ENCODE measurements at regions of chr10 and their contacts with region 1.

Region 1: GRCh38 chr10:14837757-14838581 is at the starts of genes CDNF, HSPA14 and MSANTD7:
- DNase-seq: peak; percentile 98 to 99 (median 99)
- H3K4me3 ChIP-seq: peak within 1 kb of the TSS; percentile 68 to 79
- H3K4me3 Mint-ChIP-seq: peak within 1 kb of the TSS; percentile 89 to 97 (median 94)
- H3K27ac ChIP-seq: peak within 1 kb of the TSS; percentile 91
- H3K27ac Mint-ChIP-seq: peak within 1 kb of the TSS; percentile 86 to 99 (median 98)
- H3K4me1 ChIP-seq: peaks cover 26% of the 10 kb centered on the region
- H3K4me1 Mint-ChIP-seq: peaks cover 14 to 33% (median 26%) of the 10 kb centered on the region in 4 donors
- H3K27me3 ChIP-seq: no peaks in the 10 kb centered on the region
- H3K27me3 Mint-ChIP-seq: no peaks in the 10 kb centered on the region
- total RNA-seq, gene CDNF: 1.7 to 2.5 TPM
- total RNA-seq, gene HSPA14: 16.0 to 17.7 TPM
- total RNA-seq, gene MSANTD7: 16.2 to 17.0 TPM

Region 2: DNA sequence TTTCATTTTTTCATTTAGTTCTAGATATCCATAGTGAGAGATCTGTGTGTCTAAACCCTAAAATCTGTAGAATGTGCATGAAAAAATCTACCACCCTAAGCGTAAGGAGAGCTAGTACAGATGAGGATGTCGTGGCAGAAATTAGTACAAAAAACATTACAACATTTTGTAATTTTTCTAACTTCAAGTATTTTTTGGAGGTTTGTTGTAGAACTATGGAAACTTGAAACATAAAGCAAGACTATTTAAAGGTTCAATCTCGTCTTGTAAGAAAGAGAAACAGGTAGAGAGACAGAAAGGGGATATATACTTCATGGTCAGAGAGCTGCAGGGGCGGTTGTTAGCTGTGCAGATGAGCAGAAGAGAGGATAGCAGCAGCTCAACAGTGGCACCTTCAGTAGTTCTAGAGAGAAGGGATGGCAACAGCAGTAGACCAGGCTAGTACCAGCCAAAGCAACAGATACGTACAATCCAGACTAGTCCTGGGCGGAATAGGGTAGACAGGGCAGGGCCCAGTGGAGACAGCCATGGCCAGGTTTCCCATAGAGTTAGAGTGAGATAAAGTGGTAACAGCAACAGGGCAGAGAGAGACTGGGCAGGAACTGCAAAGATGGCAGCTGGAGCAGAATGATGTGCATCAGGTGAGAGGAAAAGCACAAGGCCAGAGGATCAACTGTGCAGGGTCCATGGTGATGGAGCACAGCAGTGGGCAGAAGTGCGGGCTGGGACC is 652.5 kb before region 1 on chr10:
- CTCF ChIA-PET with region 1: no interaction called
- POLR2A ChIA-PET with region 1: interaction called, 8 read pairs
- intact Hi-C with region 1: loop called (anchors 5 kb)
- DNase-seq: peak in 3 of 5 donors; percentile 74 to 85 (median 80)
- H3K4me3 ChIP-seq: peak overlapping the region in 1 of 2 donors; percentile 7
- H3K4me3 Mint-ChIP-seq: peak overlapping the region; percentile 73 to 86 (median 80)
- H3K27ac ChIP-seq: peak overlapping the region; percentile 51
- H3K27ac Mint-ChIP-seq: peak overlapping the region; percentile 93 to 99 (median 98)
- H3K4me1 ChIP-seq: peaks cover 24% of the 10 kb centered on the region
- H3K4me1 Mint-ChIP-seq: peaks cover 21 to 28% (median 24%) of the 10 kb centered on the region in 4 donors
- H3K27me3 ChIP-seq: peaks cover 9% of the 10 kb centered on the region
- H3K27me3 Mint-ChIP-seq: peaks cover 19 to 23% of the 10 kb centered on the region in 2 donors

Region 3: GRCh38 chr10:14543046-14543903 is 294.7 kb before region 1 on chr10:
- CTCF ChIA-PET with region 1: interaction called, 9 read pairs
- POLR2A ChIA-PET with region 1: interaction called, 13 read pairs
- intact Hi-C with region 1: no loop called
- DNase-seq: peak; percentile 55 to 79 (median 59)
- H3K4me3 ChIP-seq: no peak overlapping the region
- H3K4me3 Mint-ChIP-seq: peak overlapping the region; percentile 30 to 85 (median 70)
- H3K27ac ChIP-seq: peak overlapping the region; percentile 56
- H3K27ac Mint-ChIP-seq: peak overlapping the region; percentile 56 to 94 (median 85)
- H3K4me1 ChIP-seq: peaks cover 97% of the 10 kb centered on the region
- H3K4me1 Mint-ChIP-seq: peaks cover 73 to 96% (median 84%) of the 10 kb centered on the region in 4 donors
- H3K27me3 ChIP-seq: no peaks in the 10 kb centered on the region
- H3K27me3 Mint-ChIP-seq: no peaks in the 10 kb centered on the region

Region 4: DNA sequence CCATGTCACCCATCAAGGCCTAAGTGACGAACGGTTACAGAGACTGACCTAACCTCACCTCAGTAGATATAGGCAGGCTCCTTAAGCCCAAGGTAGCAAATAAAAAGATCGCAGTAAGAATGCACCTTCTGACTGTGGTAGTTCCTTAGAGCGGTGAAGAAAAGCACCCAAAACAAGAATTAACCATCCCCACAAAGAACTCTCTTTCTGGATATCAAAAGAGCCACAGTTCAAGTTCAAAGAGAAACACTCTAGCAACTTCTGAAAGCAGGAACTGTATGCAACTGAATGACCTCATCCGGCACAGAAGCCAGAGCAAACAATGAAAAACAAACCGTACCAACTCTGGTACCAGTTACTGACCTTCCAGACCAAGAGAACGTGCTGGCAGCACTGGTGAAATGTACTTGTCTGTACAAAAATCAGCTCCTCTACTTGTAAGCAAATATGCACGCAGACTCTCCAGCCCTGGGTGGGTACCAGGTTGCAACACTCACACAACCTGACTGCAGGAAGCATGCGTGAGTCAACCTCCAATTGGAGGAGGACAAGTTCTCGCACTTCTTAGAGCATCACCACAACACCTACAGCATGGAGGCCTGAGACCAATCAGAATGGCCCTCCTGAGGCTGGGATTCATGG is 266.0 kb before region 1 on chr10:
- CTCF ChIA-PET with region 1: interaction called, 3 read pairs
- POLR2A ChIA-PET with region 1: interaction called, 11 read pairs
- intact Hi-C with region 1: no loop called
- DNase-seq: peak; percentile 86 to 91 (median 89)
- H3K4me3 ChIP-seq: peak overlapping the region; percentile 70 to 75
- H3K4me3 Mint-ChIP-seq: peak overlapping the region; percentile 90 to 98 (median 94)
- H3K27ac ChIP-seq: peak overlapping the region; percentile 82
- H3K27ac Mint-ChIP-seq: peak overlapping the region; percentile 94 to 100 (median 97)
- H3K4me1 ChIP-seq: peaks cover 93% of the 10 kb centered on the region
- H3K4me1 Mint-ChIP-seq: peaks cover 58 to 97% (median 79%) of the 10 kb centered on the region in 4 donors
- H3K27me3 ChIP-seq: no peaks in the 10 kb centered on the region
- H3K27me3 Mint-ChIP-seq: no peaks in the 10 kb centered on the region

Region 5: GRCh38 chr10:14604181-14605142 is 233.5 kb before region 1 on chr10:
- CTCF ChIA-PET with region 1: interaction called, 3 read pairs
- POLR2A ChIA-PET with region 1: interaction called, 8 read pairs
- intact Hi-C with region 1: loop called (anchors 2 kb)
- DNase-seq: peak; percentile 67 to 79 (median 70)
- H3K4me3 ChIP-seq: peak overlapping the region; percentile 48 to 86
- H3K4me3 Mint-ChIP-seq: peak overlapping the region; percentile 89 to 100 (median 96)
- H3K27ac ChIP-seq: peak overlapping the region; percentile 76
- H3K27ac Mint-ChIP-seq: peak overlapping the region; percentile 92 to 100 (median 97)
- H3K4me1 ChIP-seq: peaks cover 43% of the 10 kb centered on the region
- H3K4me1 Mint-ChIP-seq: peaks cover 38 to 59% (median 49%) of the 10 kb centered on the region in 4 donors
- H3K27me3 ChIP-seq: no peaks in the 10 kb centered on the region
- H3K27me3 Mint-ChIP-seq: no peaks in the 10 kb centered on the region

Region 6: DNA sequence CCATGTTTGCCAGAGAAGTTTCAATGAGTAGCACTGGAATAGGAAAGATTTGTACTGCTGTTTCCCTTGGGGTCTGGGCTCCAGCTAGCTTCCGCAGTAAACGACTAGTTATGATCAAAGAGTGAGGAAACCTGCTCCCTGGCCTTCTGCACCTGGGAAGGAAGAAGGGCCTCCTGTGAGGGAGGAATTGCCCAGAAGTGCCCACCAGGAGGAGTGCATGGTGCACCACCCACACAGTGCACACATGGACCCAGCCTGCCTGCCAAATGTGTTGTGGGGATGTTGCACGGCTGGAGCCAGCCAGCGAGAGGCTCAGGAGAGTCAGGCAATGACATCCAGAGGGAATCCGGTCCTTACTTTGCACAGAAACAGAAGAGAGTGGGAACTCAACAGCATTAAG is 36.2 kb before region 1 on chr10:
- CTCF ChIA-PET with region 1: no interaction called
- POLR2A ChIA-PET with region 1: no interaction called
- intact Hi-C with region 1: no loop called
- DNase-seq: no peak
- H3K4me3 ChIP-seq: no peak overlapping the region
- H3K4me3 Mint-ChIP-seq: no peak overlapping the region
- H3K27ac ChIP-seq: no peak overlapping the region
- H3K27ac Mint-ChIP-seq: no peak overlapping the region
- H3K4me1 ChIP-seq: no peaks in the 10 kb centered on the region
- H3K4me1 Mint-ChIP-seq: no peaks in the 10 kb centered on the region
- H3K27me3 ChIP-seq: no peaks in the 10 kb centered on the region
- H3K27me3 Mint-ChIP-seq: peaks cover 0 to 2% of the 10 kb centered on the region in 2 donors

Region 7: GRCh38 chr10:14878266-14879054 is 40.5 kb after region 1 on chr10 and contains the start of gene SUV39H2:
- CTCF ChIA-PET with region 1: interaction called, 14 read pairs
- POLR2A ChIA-PET with region 1: interaction called, 56 read pairs
- intact Hi-C with region 1: loop called (anchors 1 kb)
- DNase-seq: peak; percentile 87 to 91 (median 90)
- H3K4me3 ChIP-seq: peak within 1 kb of the TSS; percentile 44 to 88
- H3K4me3 Mint-ChIP-seq: peak within 1 kb of the TSS; percentile 93 to 96 (median 94)
- H3K27ac ChIP-seq: peak within 1 kb of the TSS; percentile 84
- H3K27ac Mint-ChIP-seq: peak within 1 kb of the TSS; percentile 87 to 95 (median 94)
- H3K4me1 ChIP-seq: peaks cover 17% of the 10 kb centered on the region
- H3K4me1 Mint-ChIP-seq: peaks cover 13 to 48% (median 22%) of the 10 kb centered on the region in 4 donors
- H3K27me3 ChIP-seq: no peaks in the 10 kb centered on the region
- H3K27me3 Mint-ChIP-seq: no peaks in the 10 kb centered on the region
- total RNA-seq, gene SUV39H2: 5.0 to 5.7 TPM

Region 8: DNA sequence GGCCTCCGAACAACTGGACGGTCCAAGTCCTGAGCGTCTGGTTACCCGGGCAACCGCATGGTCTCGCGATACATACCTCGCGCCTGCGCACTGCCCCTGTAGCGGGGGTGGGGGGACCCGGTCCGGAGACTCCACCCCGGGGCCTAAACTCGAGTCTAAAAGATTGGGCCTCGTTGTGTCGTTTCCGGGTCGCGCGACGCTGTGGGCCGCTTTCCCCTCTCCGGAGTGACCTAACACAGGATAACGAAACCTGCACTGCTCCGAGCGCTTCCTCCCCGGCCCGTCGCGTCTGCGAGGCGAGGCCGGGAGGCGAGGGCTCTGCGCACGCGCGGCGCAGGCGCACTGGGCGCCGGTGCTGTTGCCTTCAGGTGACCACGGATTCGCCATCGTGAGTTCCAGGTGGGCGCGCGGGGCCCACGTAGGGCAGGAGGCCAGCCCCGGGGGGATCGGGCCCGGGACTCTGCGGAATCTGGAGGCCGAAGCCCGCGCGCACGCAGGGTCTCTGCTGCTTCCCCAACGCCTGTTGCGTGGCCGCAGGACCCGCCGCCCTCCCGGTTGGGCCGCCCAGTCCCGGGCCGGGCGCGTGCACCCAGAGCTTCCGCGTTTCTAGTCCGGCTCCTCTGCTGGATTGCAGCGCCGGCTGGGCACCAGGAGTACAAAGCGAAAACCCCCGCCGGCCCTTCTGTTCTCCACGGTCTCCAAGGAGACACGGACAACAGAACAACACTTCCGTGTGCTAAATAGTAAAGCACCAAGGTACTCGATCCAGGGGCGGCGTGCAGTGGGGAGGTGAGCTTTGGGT is 259.2 kb after region 1 on chr10 and contains the start of gene RPP38:
- CTCF ChIA-PET with region 1: no interaction called
- POLR2A ChIA-PET with region 1: interaction called, 5 read pairs
- intact Hi-C with region 1: loop called (anchors 2 kb)
- DNase-seq: peak; percentile 94 to 97 (median 95)
- H3K4me3 ChIP-seq: peak within 1 kb of the TSS; percentile 86 to 97
- H3K4me3 Mint-ChIP-seq: peak within 1 kb of the TSS; percentile 91 to 99 (median 96)
- H3K27ac ChIP-seq: peak within 1 kb of the TSS; percentile 95
- H3K27ac Mint-ChIP-seq: peak within 1 kb of the TSS; percentile 94 to 99 (median 98)
- H3K4me1 ChIP-seq: peaks cover 38% of the 10 kb centered on the region
- H3K4me1 Mint-ChIP-seq: peaks cover 16 to 44% (median 31%) of the 10 kb centered on the region in 4 donors
- H3K27me3 ChIP-seq: no peaks in the 10 kb centered on the region
- H3K27me3 Mint-ChIP-seq: no peaks in the 10 kb centered on the region
- total RNA-seq, gene RPP38: 19.8 to 21.8 TPM

Measured in CD4-positive, alpha-beta memory T cell (primary cell).